ENCODE measurements at regions of chr4 and their contacts with region 1.

Region 1: DNA sequence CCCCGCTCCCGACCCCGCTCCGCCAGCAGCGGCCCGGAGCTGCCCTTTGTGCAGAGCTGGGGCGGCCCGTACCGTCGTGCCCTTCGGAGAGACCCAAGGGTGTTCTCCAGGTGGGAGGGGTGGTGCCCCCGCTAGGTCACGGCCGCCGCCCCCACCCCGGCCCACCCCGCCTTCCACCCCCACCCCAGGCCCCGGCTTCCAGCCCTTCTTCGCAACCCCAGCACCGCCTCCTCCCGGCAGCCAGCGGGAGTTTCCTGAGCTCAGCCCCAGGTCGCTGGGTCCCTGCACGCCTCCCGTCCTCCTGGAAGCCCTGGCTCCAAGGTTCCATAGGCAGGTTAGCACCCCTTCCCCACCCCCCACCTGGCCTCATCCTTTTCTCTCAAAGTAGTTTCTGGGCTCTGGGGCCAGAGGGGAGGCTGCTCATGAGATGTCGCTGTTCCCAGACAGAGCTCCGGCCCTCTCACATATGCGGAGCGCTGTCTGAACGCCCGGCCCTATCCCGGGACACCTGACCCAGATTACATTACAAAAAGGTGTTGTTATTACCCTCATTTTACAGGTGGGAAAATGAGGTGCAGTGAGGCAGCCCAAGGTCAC is 25.2 kb upstream of the FGFR3 start:
- DNase-seq: peak; percentile 84 to 87
- H3K4me3 ChIP-seq: peak overlapping the region; percentile 42
- H3K4me3 Mint-ChIP-seq: peak overlapping the region; percentile 69
- H3K27ac Mint-ChIP-seq: no peak overlapping the region
- H3K4me1 ChIP-seq: peaks cover 52% of the 10 kb centered on the region
- H3K4me1 Mint-ChIP-seq: peaks cover 12% of the 10 kb centered on the region
- H3K27me3 ChIP-seq: no peaks in the 10 kb centered on the region
- H3K27me3 Mint-ChIP-seq: no peaks in the 10 kb centered on the region
- CTCF ChIP-seq: peak; percentile 32 to 40

Region 2: GRCh38 chr4:1693129-1693896 is 74.6 kb before region 1 on chr4:
- CTCF ChIA-PET with region 1: interaction called, 12 read pairs
- POLR2A ChIA-PET with region 1: no interaction called
- intact Hi-C with region 1: no loop called
- DNase-seq: peak; percentile 79 to 88
- H3K4me3 ChIP-seq: no peak overlapping the region
- H3K4me3 Mint-ChIP-seq: no peak overlapping the region
- H3K27ac Mint-ChIP-seq: no peak overlapping the region
- H3K4me1 ChIP-seq: no peaks in the 10 kb centered on the region
- H3K4me1 Mint-ChIP-seq: no peaks in the 10 kb centered on the region
- H3K27me3 ChIP-seq: no peaks in the 10 kb centered on the region
- H3K27me3 Mint-ChIP-seq: no peaks in the 10 kb centered on the region
- CTCF ChIP-seq: peak; percentile 82 to 87

Region 3: GRCh38 chr4:1746265-1746691 is 21.6 kb before region 1 on chr4:
- CTCF ChIA-PET with region 1: interaction called, 17 read pairs
- POLR2A ChIA-PET with region 1: interaction called, 4 read pairs
- intact Hi-C with region 1: no loop called
- DNase-seq: peak; percentile 80 to 89
- H3K4me3 ChIP-seq: no peak overlapping the region
- H3K4me3 Mint-ChIP-seq: no peak overlapping the region
- H3K27ac Mint-ChIP-seq: no peak overlapping the region
- H3K4me1 ChIP-seq: 0 out of 2 replicates have a peak, but pooled peaks cover 5% of the 10 kb centered on the region
- H3K4me1 Mint-ChIP-seq: no peaks in the 10 kb centered on the region
- H3K27me3 ChIP-seq: no peaks in the 10 kb centered on the region
- H3K27me3 Mint-ChIP-seq: no peaks in the 10 kb centered on the region
- CTCF ChIP-seq: peak; percentile 66 to 85

Region 4: GRCh38 chr4:1777822-1778641 is 10.2 kb after region 1 on chr4:
- CTCF ChIA-PET with region 1: interaction called, 14 read pairs
- POLR2A ChIA-PET with region 1: interaction called, 5 read pairs
- intact Hi-C with region 1: loop called (anchors 2 kb)
- DNase-seq: peak; percentile 60 to 86
- H3K4me3 ChIP-seq: no peak overlapping the region
- H3K4me3 Mint-ChIP-seq: no peak overlapping the region
- H3K27ac Mint-ChIP-seq: no peak overlapping the region
- H3K4me1 ChIP-seq: peaks cover 28% of the 10 kb centered on the region
- H3K4me1 Mint-ChIP-seq: no peaks in the 10 kb centered on the region
- H3K27me3 ChIP-seq: no peaks in the 10 kb centered on the region
- H3K27me3 Mint-ChIP-seq: no peaks in the 10 kb centered on the region
- CTCF ChIP-seq: peak in 1 of 2 experiments; percentile 19

Region 5: DNA sequence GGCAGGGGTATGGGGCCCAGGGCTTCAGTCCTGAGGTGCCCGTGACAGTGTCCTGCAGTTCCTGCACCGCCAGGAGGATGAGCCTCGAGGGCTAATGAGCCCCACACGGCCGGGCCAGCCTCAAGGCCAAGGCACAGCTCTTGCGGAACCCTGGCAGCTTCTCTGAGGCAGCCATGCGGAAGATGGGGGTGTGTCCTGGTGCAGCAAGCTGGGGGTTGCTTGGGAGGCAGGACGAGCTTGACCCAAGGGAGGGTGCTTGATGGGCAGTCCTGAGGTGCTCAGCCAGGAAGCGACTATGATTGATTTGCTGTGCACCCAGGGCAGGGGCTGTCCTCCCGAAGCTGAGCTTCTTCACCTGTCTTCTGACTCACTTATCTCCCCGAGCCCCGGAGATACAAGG is 16.1 kb after region 1 on chr4:
- CTCF ChIA-PET with region 1: interaction called, 14 read pairs
- POLR2A ChIA-PET with region 1: no interaction called
- intact Hi-C with region 1: loop called (anchors 2 kb)
- DNase-seq: no peak
- H3K4me3 ChIP-seq: no peak overlapping the region
- H3K4me3 Mint-ChIP-seq: no peak overlapping the region
- H3K27ac Mint-ChIP-seq: no peak overlapping the region
- H3K4me1 ChIP-seq: peaks cover 23% of the 10 kb centered on the region; the same call in 1 of the 2 replicates
- H3K4me1 Mint-ChIP-seq: no peaks in the 10 kb centered on the region
- H3K27me3 ChIP-seq: no peaks in the 10 kb centered on the region
- H3K27me3 Mint-ChIP-seq: no peaks in the 10 kb centered on the region
- CTCF ChIP-seq: no peak

Region 6: GRCh38 chr4:1792832-1793495 is 25.1 kb after region 1 on chr4 and contains the start of gene FGFR3:
- CTCF ChIA-PET with region 1: interaction called, 35 read pairs
- POLR2A ChIA-PET with region 1: interaction called, 23 read pairs
- intact Hi-C with region 1: loop called (anchors 1 kb)
- DNase-seq: peak; percentile 80 to 83
- H3K4me3 ChIP-seq: peak within 1 kb of the TSS; percentile 73
- H3K4me3 Mint-ChIP-seq: peak within 1 kb of the TSS; percentile 68
- H3K27ac Mint-ChIP-seq: no peak within 1 kb of the TSS
- H3K4me1 ChIP-seq: peaks cover 34% of the 10 kb centered on the region
- H3K4me1 Mint-ChIP-seq: peaks cover 6% of the 10 kb centered on the region
- H3K27me3 ChIP-seq: no peaks in the 10 kb centered on the region
- H3K27me3 Mint-ChIP-seq: no peaks in the 10 kb centered on the region
- CTCF ChIP-seq: no peak
- total RNA-seq, gene FGFR3: 112 and 132 TPM in 2 replicates

Region 7: GRCh38 chr4:1809754-1810511 is 42.1 kb after region 1 on chr4:
- CTCF ChIA-PET with region 1: interaction called, 8 read pairs
- POLR2A ChIA-PET with region 1: interaction called, 7 read pairs
- intact Hi-C with region 1: loop called (anchors 1 kb)
- DNase-seq: peak; percentile 84 to 92
- H3K4me3 ChIP-seq: no peak overlapping the region
- H3K4me3 Mint-ChIP-seq: no peak overlapping the region
- H3K27ac Mint-ChIP-seq: peak overlapping the region; percentile 12
- H3K4me1 ChIP-seq: peaks cover 4% of the 10 kb centered on the region; the same call in 1 of the 2 replicates
- H3K4me1 Mint-ChIP-seq: no peaks in the 10 kb centered on the region
- H3K27me3 ChIP-seq: no peaks in the 10 kb centered on the region
- H3K27me3 Mint-ChIP-seq: no peaks in the 10 kb centered on the region
- CTCF ChIP-seq: peak; percentile 94 to 95

Measured in Caco-2 (cell line).